AG04450 (cell line): ENCODE measurements at regions of chr5 and their contacts with region 1.

Region 1: DNA sequence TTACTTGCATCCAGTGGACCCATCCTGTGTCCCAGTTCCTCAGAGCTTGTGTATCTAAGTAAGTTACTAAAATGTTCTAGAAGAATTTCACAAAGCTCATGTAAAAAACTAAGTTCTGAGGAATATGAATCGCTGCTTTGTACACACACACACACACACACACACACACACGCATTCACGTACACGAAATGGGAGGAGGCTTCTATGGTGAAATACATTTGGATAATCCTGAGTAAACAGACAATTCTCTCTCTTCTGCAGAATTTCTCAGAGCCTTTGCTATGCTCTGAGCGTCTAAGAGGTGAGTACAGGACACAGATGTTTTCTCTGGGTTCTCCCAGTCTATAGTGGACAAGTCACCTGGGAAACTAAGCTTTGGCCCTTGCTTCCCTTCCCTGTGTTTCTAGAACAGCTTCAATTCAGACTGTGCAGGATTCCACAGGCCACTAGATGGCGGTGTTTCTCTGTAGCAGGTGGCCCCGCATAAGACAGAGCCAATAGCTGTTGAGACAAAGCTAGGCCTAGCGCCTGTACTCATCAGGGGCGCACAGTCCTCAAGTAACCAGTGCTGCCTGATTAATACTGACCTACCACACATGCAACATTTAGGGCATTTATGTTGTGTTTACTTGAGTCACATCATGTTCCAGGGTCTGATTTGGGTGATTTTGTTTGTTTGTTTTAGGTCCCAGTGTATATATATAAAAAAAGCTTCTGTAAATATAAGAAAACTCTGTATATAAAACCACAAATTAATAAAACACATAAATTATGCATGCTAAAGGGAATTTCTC is 114.8 kb downstream of the LIFR start:
- DNase-seq: peak; percentile 82
- H3K4me3 ChIP-seq: no peak overlapping the region
- H3K27ac ChIP-seq: no peak overlapping the region
- H3K27me3 ChIP-seq: peaks cover 2% of the 10 kb centered on the region
- CTCF ChIP-seq: peak; percentile 99

Region 2: DNA sequence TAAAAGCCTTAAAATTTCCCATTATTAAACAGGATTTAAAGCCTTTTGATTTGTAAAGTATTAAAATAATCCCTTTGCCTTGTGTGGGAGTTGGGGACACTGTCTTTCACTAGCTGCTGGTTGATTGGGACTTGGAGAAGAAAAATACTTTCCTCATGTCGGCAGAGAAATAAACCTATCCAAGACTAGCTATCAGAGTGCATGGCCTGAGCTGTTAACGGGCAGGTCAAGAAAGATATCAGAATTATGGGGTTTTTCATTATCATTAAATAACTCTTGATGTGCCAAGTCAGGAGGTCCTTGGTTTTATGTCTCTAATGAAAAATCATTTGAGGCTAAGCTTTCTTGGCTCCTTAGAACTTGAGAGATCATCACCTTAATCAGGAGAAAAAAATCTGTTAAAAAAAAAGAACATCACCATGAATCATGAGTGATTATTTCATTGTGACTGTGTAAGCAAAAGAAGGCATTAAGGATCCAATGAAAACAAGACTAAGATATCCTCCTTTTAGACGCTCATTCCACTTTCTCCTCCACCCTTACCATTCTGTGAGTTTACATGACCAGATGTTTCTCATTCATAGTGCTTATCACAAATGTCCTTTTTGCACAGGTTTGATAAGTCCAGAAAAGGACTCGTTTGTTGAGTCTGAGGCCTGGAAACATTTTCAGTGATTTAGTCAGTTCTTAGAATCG is 323.7 kb before region 1 on chr5:
- CTCF ChIA-PET with region 1: no interaction called
- POLR2A ChIA-PET with region 1: no interaction called
- DNase-seq: no peak
- H3K4me3 ChIP-seq: no peak overlapping the region
- H3K27ac ChIP-seq: no peak overlapping the region
- H3K27me3 ChIP-seq: no peaks in the 10 kb centered on the region
- CTCF ChIP-seq: no peak

Region 3: DNA sequence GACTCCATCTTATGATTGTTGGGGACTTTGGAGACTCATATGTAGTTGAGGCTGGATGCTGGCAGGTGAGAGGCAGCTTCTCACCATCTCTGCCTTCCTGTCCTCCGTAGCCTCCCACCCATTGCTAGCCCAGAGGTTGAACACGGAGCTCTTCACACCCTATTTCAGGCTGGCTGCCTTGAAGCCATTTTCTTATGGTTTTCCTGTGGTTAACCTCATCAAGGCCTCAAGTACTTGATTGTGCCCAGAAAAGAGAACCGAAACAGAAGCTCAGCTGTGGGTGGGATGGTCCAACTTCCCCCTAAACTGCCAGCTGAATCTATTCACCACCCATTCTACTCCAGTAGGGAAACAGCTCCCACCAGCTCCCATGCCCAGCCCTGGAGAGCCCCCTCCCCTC is 11.9 kb after region 1 on chr5:
- CTCF ChIA-PET with region 1: interaction called, 35 read pairs
- POLR2A ChIA-PET with region 1: no interaction called
- DNase-seq: no peak
- H3K4me3 ChIP-seq: no peak overlapping the region
- H3K27ac ChIP-seq: no peak overlapping the region
- H3K27me3 ChIP-seq: peaks cover 2% of the 10 kb centered on the region
- CTCF ChIP-seq: no peak

Region 4: DNA sequence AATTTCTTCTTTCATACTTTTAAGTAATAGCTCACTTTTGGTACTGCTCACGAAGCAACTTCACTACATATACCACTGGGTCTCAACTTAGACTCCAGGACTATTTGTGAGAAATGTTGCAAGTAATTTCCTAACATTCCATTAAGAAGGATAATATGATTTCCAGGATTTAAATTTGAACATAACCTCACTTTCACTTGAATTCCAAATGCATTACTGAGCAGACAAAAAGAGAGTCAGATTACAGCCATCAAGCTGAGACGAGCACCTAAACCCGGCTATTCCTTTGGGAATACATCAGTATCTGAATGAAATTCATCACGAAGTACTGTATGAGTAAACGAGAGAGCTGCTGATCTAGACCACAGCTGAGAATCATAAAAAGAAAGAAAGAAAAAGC is 67.5 kb after region 1 on chr5:
- CTCF ChIA-PET with region 1: interaction called, 18 read pairs
- POLR2A ChIA-PET with region 1: no interaction called
- DNase-seq: peak; percentile 36
- H3K4me3 ChIP-seq: no peak overlapping the region
- H3K27ac ChIP-seq: no peak overlapping the region
- H3K27me3 ChIP-seq: no peaks in the 10 kb centered on the region
- CTCF ChIP-seq: no peak

Region 5: GRCh38 chr5:38598994-38599611 is 157.5 kb after region 1 on chr5:
- CTCF ChIA-PET with region 1: interaction called, 13 read pairs
- POLR2A ChIA-PET with region 1: no interaction called
- DNase-seq: peak; percentile 51
- H3K4me3 ChIP-seq: no peak overlapping the region
- H3K27ac ChIP-seq: no peak overlapping the region
- H3K27me3 ChIP-seq: no peaks in the 10 kb centered on the region
- CTCF ChIP-seq: no peak

Region 6: DNA sequence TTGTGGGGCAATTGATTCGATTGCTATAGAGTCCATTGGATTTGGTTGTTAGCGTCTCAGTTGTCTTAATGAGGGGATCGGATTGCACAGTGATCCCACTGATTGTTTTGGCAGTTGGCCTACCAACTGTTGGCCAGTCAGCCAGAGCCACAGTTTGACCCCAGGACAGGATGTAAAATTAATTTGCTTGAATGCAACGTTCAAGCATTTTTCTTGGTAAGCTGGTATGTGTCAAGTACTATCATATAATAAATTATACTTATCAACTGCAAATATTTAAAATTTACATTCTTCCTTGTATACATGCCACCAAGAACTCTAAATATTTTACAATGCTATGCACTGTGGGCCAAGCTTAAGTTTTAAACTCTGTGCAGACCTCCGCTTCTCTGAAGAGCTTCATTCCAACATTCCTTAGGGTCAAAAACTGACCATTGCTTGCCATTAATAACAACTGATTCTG is 323.8 kb after region 1 on chr5:
- CTCF ChIA-PET with region 1: interaction called, 23 read pairs
- POLR2A ChIA-PET with region 1: interaction called, 3 read pairs
- DNase-seq: peak; percentile 66
- H3K4me3 ChIP-seq: no peak overlapping the region
- H3K27ac ChIP-seq: no peak overlapping the region
- H3K27me3 ChIP-seq: peaks cover 2% of the 10 kb centered on the region
- CTCF ChIP-seq: no peak

Region 7: GRCh38 chr5:38816083-38817030 is 374.7 kb after region 1 on chr5:
- CTCF ChIA-PET with region 1: interaction called, 364 read pairs
- POLR2A ChIA-PET with region 1: no interaction called
- DNase-seq: no peak
- H3K4me3 ChIP-seq: no peak overlapping the region
- H3K27ac ChIP-seq: no peak overlapping the region
- H3K27me3 ChIP-seq: no peaks in the 10 kb centered on the region
- CTCF ChIP-seq: no peak